ENCODE measurements at regions of chr1 and their contacts with region 1.

Region 1: GRCh38 chr1:40338745-40339424 is 21.8 kb upstream of the COL9A2 start:
- DNase-seq: peak; percentile 78
- H3K4me3 ChIP-seq: peak overlapping the region in 1 of 2 experiments; percentile 38; a peak in 1 of 4 replicates
- H3K27ac ChIP-seq: no peak overlapping the region
- H3K4me1 ChIP-seq: no peaks in the 10 kb centered on the region; a peak in 1 of 4 replicates
- H3K27me3 ChIP-seq: no peaks in the 10 kb centered on the region; the same call in 1 of the 2 replicates
- CTCF ChIP-seq: peak; percentile 99
- EP300 ChIP-seq: no peak
- RAD21 ChIP-seq: peak; percentile 99

Region 2: GRCh38 chr1:40153073-40153770 is 185.7 kb before region 1 on chr1:
- CTCF ChIA-PET with region 1: interaction called, 280 read pairs
- POLR2A ChIA-PET with region 1: no interaction called
- DNase-seq: peak; percentile 27
- H3K4me3 ChIP-seq: no peak overlapping the region
- H3K27ac ChIP-seq: no peak overlapping the region
- H3K4me1 ChIP-seq: no peaks in the 10 kb centered on the region
- H3K27me3 ChIP-seq: no peaks in the 10 kb centered on the region
- CTCF ChIP-seq: peak; percentile 79
- EP300 ChIP-seq: no peak
- RAD21 ChIP-seq: peak; percentile 76

Region 3: DNA sequence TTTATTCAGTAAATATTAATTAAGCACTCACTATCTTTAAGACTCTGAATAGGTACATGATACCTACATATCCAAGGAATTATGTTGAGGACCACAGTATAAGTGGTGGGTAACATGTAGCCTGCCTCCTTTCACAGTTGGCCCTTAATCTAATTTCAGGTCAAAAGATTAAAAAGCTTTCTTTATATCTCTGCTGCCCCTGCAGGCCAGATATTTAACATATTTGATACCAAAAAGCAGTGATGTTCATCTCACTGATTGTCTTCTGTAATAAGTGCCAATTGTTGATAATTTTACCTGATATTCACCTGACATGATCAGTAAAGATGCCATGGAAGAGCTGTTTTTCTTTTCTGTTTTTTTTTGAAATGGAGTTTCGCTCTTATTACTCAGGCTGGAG is 141.2 kb before region 1 on chr1:
- CTCF ChIA-PET with region 1: interaction called, 13 read pairs
- POLR2A ChIA-PET with region 1: no interaction called
- DNase-seq: peak; percentile 44
- H3K4me3 ChIP-seq: no peak overlapping the region
- H3K27ac ChIP-seq: no peak overlapping the region
- H3K4me1 ChIP-seq: no peaks in the 10 kb centered on the region
- H3K27me3 ChIP-seq: no peaks in the 10 kb centered on the region
- CTCF ChIP-seq: peak; percentile 47
- EP300 ChIP-seq: no peak
- RAD21 ChIP-seq: 0 out of 2 replicates have a peak, but pooled peaks have one; percentile 5

Region 4: GRCh38 chr1:40357625-40358024 is 18.7 kb after region 1 on chr1:
- CTCF ChIA-PET with region 1: interaction called, 71 read pairs
- POLR2A ChIA-PET with region 1: no interaction called
- DNase-seq: no peak
- H3K4me3 ChIP-seq: no peak overlapping the region
- H3K27ac ChIP-seq: no peak overlapping the region
- H3K4me1 ChIP-seq: no peaks in the 10 kb centered on the region
- H3K27me3 ChIP-seq: no peaks in the 10 kb centered on the region
- CTCF ChIP-seq: no peak
- EP300 ChIP-seq: no peak
- RAD21 ChIP-seq: no peak

Region 5: DNA sequence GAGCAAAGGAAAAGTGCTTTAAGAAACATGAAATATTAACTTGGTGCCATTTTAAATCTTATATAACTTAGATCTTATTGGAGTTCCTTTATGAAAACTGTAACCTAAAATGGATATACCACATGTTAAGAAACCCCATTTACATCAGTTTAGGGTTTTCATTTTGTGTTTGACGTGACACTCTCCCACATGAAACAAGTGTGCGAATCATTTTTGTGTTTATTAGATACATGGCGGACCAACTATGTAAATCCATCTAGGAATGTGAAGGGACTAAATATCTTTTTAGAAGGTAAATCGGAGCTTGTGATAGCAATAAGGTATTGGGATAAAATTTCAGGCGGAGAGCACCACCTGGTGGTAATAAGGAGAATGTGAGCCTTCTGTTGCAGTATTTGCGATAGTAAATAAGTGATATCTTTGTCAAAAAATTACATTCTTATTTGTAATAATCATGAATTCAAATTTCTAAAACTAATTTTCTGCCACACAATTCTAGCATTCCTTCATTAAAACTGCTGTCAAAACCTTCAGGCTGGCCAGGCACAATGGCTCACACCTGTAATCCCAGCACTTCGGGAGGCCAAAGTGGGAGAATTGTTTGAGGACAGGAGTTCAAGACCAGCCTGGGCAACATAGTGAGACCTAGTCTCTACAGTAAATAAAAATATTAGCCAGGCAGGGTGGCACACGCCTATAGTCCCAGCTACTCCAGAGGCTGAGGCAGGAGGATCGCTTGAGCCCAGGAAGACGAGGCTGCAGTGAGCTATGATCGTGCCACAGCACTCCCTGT is 66.0 kb after region 1 on chr1:
- CTCF ChIA-PET with region 1: interaction called, 78 read pairs
- POLR2A ChIA-PET with region 1: no interaction called
- DNase-seq: peak; percentile 49
- H3K4me3 ChIP-seq: no peak overlapping the region; a peak in 1 of 4 replicates
- H3K27ac ChIP-seq: no peak overlapping the region
- H3K4me1 ChIP-seq: no peaks in the 10 kb centered on the region; a peak in 2 of 4 replicates
- H3K27me3 ChIP-seq: no peaks in the 10 kb centered on the region
- CTCF ChIP-seq: peak; percentile 94
- EP300 ChIP-seq: no peak
- RAD21 ChIP-seq: peak; percentile 89